GM10248 (cell line): ENCODE measurements at regions of chr6 and their contacts with region 1.

Region 1: GRCh38 chr6:36765594-36766398 is 68.2 kb downstream of the RAB44 start:
- DNase-seq: peak; percentile 90
- CTCF ChIP-seq: peak; percentile 98

Region 2: GRCh38 chr6:36724514-36725390 is 41.0 kb before region 1 on chr6:
- CTCF ChIA-PET with region 1: interaction called, 10 read pairs
- POLR2A ChIA-PET with region 1: no interaction called
- DNase-seq: peak; percentile 71
- CTCF ChIP-seq: peak; percentile 58

Region 3: GRCh38 chr6:36793913-36794712 is 28.3 kb after region 1 on chr6:
- CTCF ChIA-PET with region 1: interaction called, 596 read pairs
- POLR2A ChIA-PET with region 1: no interaction called
- DNase-seq: no peak
- CTCF ChIP-seq: no peak

Region 4: DNA sequence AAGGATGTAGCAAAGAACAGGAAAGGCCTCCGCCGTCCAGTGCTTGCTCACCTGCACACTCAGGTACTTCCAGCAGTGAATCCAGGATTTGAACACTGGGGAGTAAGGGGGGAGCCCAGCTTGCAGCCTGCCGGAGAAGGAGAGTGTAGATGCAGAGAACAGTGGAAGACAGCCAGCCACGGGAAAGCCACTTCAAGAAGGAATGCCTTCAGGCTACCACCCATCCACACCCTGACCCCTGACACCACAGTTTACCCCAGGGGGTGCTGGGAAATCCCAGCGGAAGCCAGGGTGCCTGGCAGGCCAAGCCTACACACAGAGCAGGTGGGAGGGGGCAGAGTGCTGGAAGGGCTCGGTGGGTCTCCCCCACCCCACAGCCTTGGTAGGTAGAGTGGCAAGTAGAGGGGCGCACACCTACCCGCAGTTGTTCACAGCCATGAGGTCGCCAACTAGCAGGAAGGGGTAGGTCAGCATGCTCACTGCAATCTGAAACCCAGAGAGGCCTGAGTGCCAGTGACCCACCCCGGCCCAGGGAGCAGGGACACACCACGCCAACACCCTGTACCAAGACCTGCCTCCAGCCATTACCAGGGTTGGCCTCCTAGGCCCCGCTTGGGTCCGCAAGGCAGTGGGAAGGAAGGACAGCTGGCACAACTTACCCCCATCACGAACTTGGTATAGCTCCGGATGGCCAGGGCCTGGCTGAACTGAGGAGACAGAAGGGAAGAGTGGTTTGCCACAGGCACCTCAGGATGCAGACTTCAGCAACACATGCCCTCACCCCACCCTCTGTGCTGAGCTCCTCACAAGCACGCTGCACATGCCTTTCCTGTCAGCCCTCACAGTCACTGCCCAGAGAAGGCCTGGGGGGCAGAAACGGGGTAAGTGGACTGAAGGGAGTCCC is 204.4 kb after region 1 on chr6:
- CTCF ChIA-PET with region 1: no interaction called
- POLR2A ChIA-PET with region 1: no interaction called
- DNase-seq: no peak
- CTCF ChIP-seq: no peak

Region 5: DNA sequence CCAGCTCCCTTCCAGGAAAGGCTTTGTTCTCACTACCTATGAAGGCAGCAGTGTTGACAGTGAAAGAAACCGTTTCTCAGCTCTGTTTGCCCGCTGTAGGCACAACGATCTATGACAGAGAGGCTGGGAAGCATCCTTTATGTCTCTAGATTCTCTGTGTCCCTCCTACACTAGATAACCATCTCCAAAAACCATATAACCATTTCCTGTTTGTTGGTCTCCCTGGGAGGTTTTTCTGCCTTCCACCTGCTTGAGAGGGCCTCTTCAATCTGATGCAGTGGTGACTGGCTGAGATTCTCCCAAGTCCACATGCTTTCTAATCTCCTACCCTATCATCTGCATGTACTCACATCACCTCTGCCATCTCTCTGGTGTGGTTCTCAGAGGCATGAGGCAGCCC is 524.1 kb after region 1 on chr6:
- CTCF ChIA-PET with region 1: no interaction called
- POLR2A ChIA-PET with region 1: no interaction called
- DNase-seq: no peak
- CTCF ChIP-seq: no peak